AG04450 (cell line): ENCODE measurements at regions of chr11 and their contacts with region 1.

Region 1: DNA sequence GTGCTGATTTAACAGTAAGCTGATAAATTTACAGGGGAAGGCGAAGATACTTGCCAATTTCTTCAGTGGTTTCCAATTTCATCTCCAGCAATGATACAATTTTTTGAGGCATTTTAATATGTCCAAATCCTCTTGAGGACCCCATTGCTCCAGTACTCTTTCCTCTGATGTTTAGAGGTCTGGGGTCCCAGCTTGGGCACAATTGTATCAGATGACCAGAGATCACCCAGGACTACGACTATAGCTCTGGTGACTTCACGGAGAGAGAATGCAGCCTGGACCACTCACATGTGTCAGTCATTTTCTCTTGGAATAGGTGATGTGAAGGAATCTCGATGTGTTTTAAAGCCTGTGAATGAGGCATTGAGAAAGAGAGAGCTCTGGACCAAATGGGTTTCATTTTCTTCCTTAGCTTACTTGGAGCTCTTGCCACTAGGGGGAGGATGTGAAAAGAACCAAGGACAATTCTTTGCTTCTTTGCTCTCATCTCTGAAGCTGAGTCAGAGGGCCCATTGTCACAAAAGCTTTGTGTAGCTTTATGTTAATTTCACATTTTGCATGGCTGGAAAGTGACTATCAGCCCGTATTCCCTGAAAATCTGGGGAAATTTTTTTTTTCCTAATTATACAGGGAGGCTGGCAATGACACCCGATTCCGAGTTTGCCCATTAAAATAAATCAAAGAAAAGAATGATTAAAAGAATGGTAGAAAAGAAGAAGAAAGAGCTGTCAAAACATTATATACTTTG is 6.7 kb upstream of the CCDC90B start:
- DNase-seq: peak; percentile 29
- H3K4me3 ChIP-seq: peak overlapping the region; percentile 34; the same call in 1 of the 2 replicates
- H3K27ac ChIP-seq: no peak overlapping the region
- H3K27me3 ChIP-seq: no peaks in the 10 kb centered on the region
- CTCF ChIP-seq: peak; percentile 84

Region 2: GRCh38 chr11:83272627-83273026 is 20.3 kb before region 1 on chr11:
- CTCF ChIA-PET with region 1: interaction called, 20 read pairs
- POLR2A ChIA-PET with region 1: no interaction called
- DNase-seq: no peak
- H3K4me3 ChIP-seq: no peak overlapping the region
- H3K27ac ChIP-seq: no peak overlapping the region
- H3K27me3 ChIP-seq: no peaks in the 10 kb centered on the region
- CTCF ChIP-seq: no peak

Region 3: DNA sequence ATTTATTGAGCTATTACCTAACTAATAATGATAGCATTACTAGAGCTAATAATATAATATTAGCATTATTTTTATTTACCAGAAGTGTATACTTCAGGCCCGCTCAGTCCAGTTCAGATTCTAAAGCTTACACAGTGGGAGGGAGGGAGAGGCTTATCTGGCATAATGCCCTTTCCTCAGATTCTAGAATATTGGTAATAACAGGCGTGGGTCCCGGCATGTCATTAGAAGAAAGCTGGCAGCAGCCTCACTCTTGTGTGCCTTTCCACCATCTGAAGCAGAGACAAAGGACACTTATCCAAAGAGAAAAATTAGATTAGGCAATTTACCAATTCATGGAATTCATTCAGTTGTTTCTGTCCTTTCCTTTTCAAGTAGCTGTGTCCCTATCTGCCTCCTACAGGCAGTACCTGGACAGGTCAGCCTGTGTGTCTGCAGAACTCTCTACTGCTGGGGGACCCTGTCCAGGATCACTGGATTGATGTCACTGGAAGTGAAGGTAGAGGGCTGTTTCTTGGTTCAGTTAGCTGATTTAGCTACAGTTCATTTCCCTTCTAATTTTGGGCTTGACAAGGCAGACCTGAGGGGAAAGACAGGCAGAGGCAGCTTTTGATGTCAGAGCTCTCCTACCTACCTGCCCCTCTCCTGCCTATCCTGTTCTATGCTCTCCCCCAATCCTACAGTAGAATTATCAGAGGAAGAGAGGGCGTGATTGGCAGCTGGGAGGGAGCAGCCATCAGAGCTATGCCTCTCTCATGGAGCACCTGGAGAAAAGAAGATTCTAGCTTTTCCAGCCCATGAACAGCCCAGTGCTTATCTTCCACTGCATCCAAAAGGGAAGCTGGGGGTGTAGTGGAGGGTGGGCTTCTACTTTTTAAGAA is 13.6 kb after region 1 on chr11:
- CTCF ChIA-PET with region 1: interaction called, 23 read pairs
- POLR2A ChIA-PET with region 1: no interaction called
- DNase-seq: no peak
- H3K4me3 ChIP-seq: no peak overlapping the region
- H3K27ac ChIP-seq: no peak overlapping the region
- H3K27me3 ChIP-seq: no peaks in the 10 kb centered on the region
- CTCF ChIP-seq: no peak

Region 4: DNA sequence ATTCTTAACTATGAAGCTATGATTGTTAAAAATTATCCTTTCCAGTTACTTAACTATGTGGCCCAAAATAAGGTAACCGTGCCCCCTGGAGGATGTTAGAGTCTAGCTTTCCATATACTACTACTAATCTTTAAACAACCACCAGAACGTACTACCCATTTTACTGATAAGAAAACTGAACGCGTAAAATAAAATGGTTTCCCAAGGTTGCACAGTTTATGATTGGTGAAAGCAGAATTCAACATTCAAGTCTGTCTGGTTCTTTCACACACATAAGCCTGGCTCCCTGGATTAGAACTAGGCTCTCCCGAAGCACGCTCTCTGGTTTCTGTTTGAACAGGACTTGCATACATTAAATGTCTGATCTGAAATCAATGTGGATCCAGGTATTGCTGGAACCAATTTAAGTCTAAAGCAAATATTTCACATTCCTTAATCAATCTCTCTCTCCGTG is 431.2 kb after region 1 on chr11:
- CTCF ChIA-PET with region 1: interaction called, 186 read pairs
- POLR2A ChIA-PET with region 1: no interaction called
- DNase-seq: peak; percentile 26
- H3K4me3 ChIP-seq: 0 out of 2 replicates have a peak overlapping the region, but pooled peaks have one; percentile 0
- H3K27ac ChIP-seq: no peak overlapping the region
- H3K27me3 ChIP-seq: peaks cover 7% of the 10 kb centered on the region
- CTCF ChIP-seq: peak; percentile 62

Region 5: GRCh38 chr11:83827940-83828554 is 535.2 kb after region 1 on chr11:
- CTCF ChIA-PET with region 1: interaction called, 330 read pairs
- POLR2A ChIA-PET with region 1: no interaction called
- DNase-seq: no peak
- H3K4me3 ChIP-seq: peak overlapping the region; percentile 37
- H3K27ac ChIP-seq: peak overlapping the region; percentile 65
- H3K27me3 ChIP-seq: no peaks in the 10 kb centered on the region
- CTCF ChIP-seq: peak; percentile 67